ENCODE measurements at regions of chr15 and their contacts with region 1.

Region 1: GRCh38 chr15:40440743-40441564 is at the start of gene BAHD1:
- DNase-seq: peak; percentile 91
- H3K4me3 Mint-ChIP-seq: peak within 1 kb of the TSS; percentile 89
- H3K27ac Mint-ChIP-seq: peak within 1 kb of the TSS; percentile 70
- H3K4me1 Mint-ChIP-seq: peaks cover 38% of the 10 kb centered on the region
- H3K27me3 Mint-ChIP-seq: peaks cover 7% of the 10 kb centered on the region
- CTCF ChIP-seq: no peak
- total RNA-seq, gene BAHD1: 14.9 and 15.1 TPM in 2 replicates

Region 2: GRCh38 chr15:40357723-40358470 is 83.1 kb before region 1 on chr15 and contains the start of gene DISP2:
- CTCF ChIA-PET with region 1: no interaction called
- POLR2A ChIA-PET with region 1: no interaction called
- intact Hi-C with region 1: no loop called
- DNase-seq: peak; percentile 71
- H3K4me3 Mint-ChIP-seq: peak within 1 kb of the TSS; percentile 73
- H3K27ac Mint-ChIP-seq: no peak within 1 kb of the TSS
- H3K4me1 Mint-ChIP-seq: no peaks in the 10 kb centered on the region
- H3K27me3 Mint-ChIP-seq: no peaks in the 10 kb centered on the region
- CTCF ChIP-seq: no peak
- total RNA-seq, gene DISP2: 1.8 and 2.1 TPM in 2 replicates

Region 3: DNA sequence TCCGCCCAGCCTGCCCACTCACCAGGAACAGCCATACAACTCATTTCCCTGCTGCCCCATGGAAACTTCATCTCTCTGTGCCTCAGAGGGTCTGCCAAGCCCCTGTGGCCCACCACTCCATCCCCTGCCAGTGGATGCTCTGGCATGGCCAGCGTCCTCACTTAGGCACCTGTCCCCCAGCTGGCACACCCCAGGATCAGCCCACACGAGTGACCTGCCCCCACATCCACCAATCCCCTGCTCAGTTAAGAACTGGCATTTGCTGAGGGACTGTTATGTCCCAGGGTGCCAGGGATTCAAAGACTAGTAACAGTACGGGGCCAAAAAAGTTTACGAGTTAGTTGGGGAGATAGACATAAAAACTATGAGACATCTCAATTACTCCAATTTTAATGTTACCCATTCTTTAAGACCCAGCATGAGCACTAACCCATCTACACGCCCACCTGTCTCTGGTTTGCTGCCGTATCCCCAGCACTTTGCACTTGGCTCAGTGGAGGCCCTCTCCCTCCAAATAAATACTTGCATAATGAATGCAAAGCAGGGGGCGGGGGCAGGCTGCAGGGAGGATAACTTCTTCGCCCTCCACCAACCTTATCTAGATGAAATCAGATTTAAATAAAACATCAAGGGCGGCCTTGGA is 11.8 kb before region 1 on chr15:
- CTCF ChIA-PET with region 1: no interaction called
- POLR2A ChIA-PET with region 1: no interaction called
- intact Hi-C with region 1: no loop called
- DNase-seq: no peak
- H3K4me3 Mint-ChIP-seq: no peak overlapping the region
- H3K27ac Mint-ChIP-seq: no peak overlapping the region
- H3K4me1 Mint-ChIP-seq: peaks cover 6% of the 10 kb centered on the region
- H3K27me3 Mint-ChIP-seq: no peaks in the 10 kb centered on the region
- CTCF ChIP-seq: no peak

Region 4: GRCh38 chr15:40506964-40507571 is 66.1 kb after region 1 on chr15:
- CTCF ChIA-PET with region 1: no interaction called
- POLR2A ChIA-PET with region 1: interaction called, 3 read pairs
- intact Hi-C with region 1: loop called (anchors 2 kb)
- DNase-seq: peak; percentile 69
- H3K4me3 Mint-ChIP-seq: no peak overlapping the region
- H3K27ac Mint-ChIP-seq: no peak overlapping the region
- H3K4me1 Mint-ChIP-seq: peaks cover 2% of the 10 kb centered on the region
- H3K27me3 Mint-ChIP-seq: no peaks in the 10 kb centered on the region
- CTCF ChIP-seq: peak; percentile 56

Measured in MCF 10A (cell line).